ENCODE measurements at regions of chr1 and their contacts with region 1.

Region 1: GRCh38 chr1:171801487-171801891 is 20.0 kb downstream of the METTL13 start:
- DNase-seq: no peak
- ATAC-seq: no peak
- H3K4me3 Mint-ChIP-seq: no peak overlapping the region
- H3K27ac Mint-ChIP-seq: no peak overlapping the region
- H3K4me1 Mint-ChIP-seq: peaks cover 6% of the 10 kb centered on the region
- H3K27me3 Mint-ChIP-seq: no peaks in the 10 kb centered on the region

Region 2: GRCh38 chr1:171715813-171716251 is 85.7 kb before region 1 on chr1:
- CTCF ChIA-PET with region 1: no interaction called
- POLR2A ChIA-PET with region 1: no interaction called
- DNase-seq: no peak
- ATAC-seq: no peak
- H3K4me3 Mint-ChIP-seq: no peak overlapping the region
- H3K27ac Mint-ChIP-seq: no peak overlapping the region
- H3K4me1 Mint-ChIP-seq: no peaks in the 10 kb centered on the region
- H3K27me3 Mint-ChIP-seq: no peaks in the 10 kb centered on the region

Region 3: DNA sequence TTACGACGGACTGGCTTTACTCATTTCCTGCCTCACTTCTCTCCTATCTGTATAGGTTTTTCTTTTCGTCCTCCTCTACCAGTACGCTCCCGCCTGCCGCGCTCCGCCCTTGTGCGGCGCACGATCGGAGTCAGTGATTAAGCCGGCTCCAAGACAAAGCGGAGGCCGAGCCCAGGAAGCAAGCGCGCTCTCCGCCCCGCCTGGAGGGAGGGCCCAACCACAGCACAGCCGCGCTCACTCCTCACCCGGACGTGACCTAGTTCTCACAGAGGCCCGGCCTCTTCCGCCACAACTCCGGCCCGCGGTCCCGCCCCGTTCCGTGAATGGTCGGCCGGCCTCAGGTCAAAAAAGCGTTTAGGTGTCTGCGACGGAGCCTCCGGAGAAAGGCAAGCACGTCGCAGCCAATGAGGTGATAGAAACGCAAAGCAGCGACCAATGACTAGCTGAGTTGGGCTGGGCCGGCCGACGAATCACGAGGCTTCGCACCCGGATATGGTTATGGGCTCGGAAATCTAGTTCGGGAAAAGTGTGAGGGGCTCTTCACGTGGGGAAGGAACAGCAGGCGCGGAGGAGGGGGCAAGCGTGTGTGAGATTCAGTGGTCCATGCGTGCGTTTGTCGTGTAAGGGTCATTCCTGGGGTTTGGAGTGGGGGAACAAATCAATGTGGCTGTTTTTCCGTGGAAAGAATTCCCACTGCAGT is 20.2 kb before region 1 on chr1 and contains the start of gene METTL13:
- CTCF ChIA-PET with region 1: interaction called, 23 read pairs
- POLR2A ChIA-PET with region 1: interaction called, 3 read pairs
- DNase-seq: peak; percentile 99
- ATAC-seq: peak; percentile 98
- H3K4me3 Mint-ChIP-seq: peak within 1 kb of the TSS; percentile 95
- H3K27ac Mint-ChIP-seq: peak within 1 kb of the TSS; percentile 96
- H3K4me1 Mint-ChIP-seq: peaks cover 58% of the 10 kb centered on the region
- H3K27me3 Mint-ChIP-seq: no peaks in the 10 kb centered on the region
- total RNA-seq, gene METTL13: 38.5 to 44.5 TPM

Region 4: DNA sequence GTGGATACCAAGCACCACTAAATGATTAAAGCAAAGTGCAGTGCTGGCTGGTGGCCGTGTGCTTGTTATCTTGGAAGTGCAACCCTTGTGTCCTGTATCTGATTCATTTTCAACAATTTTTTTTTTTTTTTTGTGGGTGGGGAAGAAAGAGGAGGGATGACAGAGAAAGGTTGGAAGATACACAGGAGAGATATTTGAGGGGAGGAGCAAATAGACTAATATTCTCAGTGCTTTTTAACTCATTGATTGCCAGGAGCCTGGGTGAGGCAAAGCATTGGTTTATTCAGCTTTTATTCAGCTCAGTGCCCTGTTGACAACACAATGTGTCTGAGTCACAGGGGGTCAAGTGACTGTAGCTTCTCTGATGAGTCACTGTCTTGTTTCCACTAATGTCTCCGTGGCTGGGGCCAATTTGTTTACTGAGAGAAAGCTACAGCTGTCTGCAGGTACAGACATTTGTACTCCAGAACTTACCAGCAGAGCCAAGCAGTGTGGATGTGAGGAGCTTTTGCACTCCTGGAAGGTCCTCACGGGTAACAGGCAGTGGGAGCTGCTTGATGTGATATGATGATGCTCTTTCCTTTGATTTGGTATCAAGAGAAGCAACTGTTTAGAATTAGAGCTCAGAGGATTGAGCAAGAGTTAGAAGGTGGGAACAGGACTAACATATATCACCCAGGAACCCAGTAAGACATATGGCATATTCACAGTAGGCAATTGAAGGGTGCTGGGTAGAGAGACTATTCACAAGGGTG is 16.2 kb after region 1 on chr1:
- CTCF ChIA-PET with region 1: interaction called, 33 read pairs
- POLR2A ChIA-PET with region 1: interaction called, 3 read pairs
- DNase-seq: peak; percentile 42
- ATAC-seq: peak; percentile 42
- H3K4me3 Mint-ChIP-seq: no peak overlapping the region
- H3K27ac Mint-ChIP-seq: no peak overlapping the region
- H3K4me1 Mint-ChIP-seq: peaks cover 17% of the 10 kb centered on the region
- H3K27me3 Mint-ChIP-seq: no peaks in the 10 kb centered on the region

Region 5: DNA sequence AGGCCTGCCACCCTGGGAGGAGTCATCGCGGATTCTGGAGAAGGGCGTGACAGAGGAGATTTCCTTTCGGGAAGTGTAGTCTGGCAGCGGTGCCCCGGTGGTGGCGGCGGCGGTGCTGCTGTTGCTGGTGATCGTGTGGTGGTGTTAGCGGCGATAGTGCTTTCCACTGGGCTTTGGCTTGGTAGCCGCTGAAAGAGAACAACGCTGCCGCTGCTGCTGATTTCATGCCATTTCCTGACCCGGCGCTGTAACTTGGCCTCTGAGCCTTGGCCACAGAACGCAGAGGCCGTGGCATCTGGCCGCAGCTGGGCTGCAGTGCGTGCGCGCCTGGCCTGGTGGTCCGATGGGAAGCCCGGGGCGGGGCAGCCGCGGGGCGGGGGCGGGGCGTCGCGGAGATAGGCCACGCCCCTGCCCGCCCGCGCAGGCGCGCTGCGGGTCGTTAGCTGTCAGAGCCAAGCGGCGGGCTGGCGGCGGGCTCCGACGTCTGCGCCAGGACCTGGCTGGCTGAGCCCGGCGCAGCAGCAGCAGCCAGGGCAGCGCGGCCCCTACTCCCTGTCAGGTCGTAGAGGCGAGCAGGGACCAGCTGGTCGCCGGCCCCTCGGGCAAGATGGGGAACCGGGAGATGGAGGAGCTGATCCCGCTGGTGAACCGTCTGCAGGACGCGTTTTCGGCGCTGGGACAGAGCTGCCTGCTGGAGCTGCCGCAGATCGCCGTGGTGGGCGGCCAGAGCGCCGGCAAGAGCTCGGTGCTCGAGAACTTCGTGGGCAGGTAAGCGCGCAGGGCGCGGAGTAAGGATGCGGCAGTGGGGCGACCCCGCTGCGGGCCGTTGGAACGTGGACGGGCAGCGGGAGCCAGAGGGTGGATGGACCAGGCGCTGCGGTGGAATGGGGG is 39.8 kb after region 1 on chr1 and contains the start of gene DNM3:
- CTCF ChIA-PET with region 1: interaction called, 24 read pairs
- POLR2A ChIA-PET with region 1: no interaction called
- DNase-seq: peak; percentile 77
- ATAC-seq: peak; percentile 97
- H3K4me3 Mint-ChIP-seq: peak within 1 kb of the TSS; percentile 78
- H3K27ac Mint-ChIP-seq: peak within 1 kb of the TSS; percentile 21
- H3K4me1 Mint-ChIP-seq: peaks cover 16% of the 10 kb centered on the region
- H3K27me3 Mint-ChIP-seq: peaks cover 32% of the 10 kb centered on the region
- total RNA-seq, gene DNM3: 1.5 to 1.6 TPM

Region 6: GRCh38 chr1:171984850-171985485 is 183.5 kb after region 1 on chr1:
- CTCF ChIA-PET with region 1: interaction called, 142 read pairs
- POLR2A ChIA-PET with region 1: no interaction called
- DNase-seq: peak; percentile 25
- ATAC-seq: peak; percentile 57
- H3K4me3 Mint-ChIP-seq: no peak overlapping the region
- H3K27ac Mint-ChIP-seq: no peak overlapping the region
- H3K4me1 Mint-ChIP-seq: no peaks in the 10 kb centered on the region
- H3K27me3 Mint-ChIP-seq: peaks cover 9% of the 10 kb centered on the region

Region 7: GRCh38 chr1:172002725-172003345 is 201.3 kb after region 1 on chr1:
- CTCF ChIA-PET with region 1: interaction called, 19 read pairs
- POLR2A ChIA-PET with region 1: interaction called, 3 read pairs
- DNase-seq: peak; percentile 49
- ATAC-seq: no peak
- H3K4me3 Mint-ChIP-seq: no peak overlapping the region
- H3K27ac Mint-ChIP-seq: no peak overlapping the region
- H3K4me1 Mint-ChIP-seq: peaks cover 1% of the 10 kb centered on the region
- H3K27me3 Mint-ChIP-seq: no peaks in the 10 kb centered on the region